ENCODE measurements at regions of chr1 and their contacts with region 1.

Region 1: GRCh38 chr1:47437447-47438164 is at the start of gene FOXD2:
- DNase-seq: peak; percentile 97
- H3K4me3 ChIP-seq: peak within 1 kb of the TSS; percentile 92
- H3K27ac ChIP-seq: peak within 1 kb of the TSS; percentile 78
- H3K4me1 ChIP-seq: peaks cover 11% of the 10 kb centered on the region
- CTCF ChIP-seq: peak; percentile 80
- total RNA-seq, gene FOXD2: 0.44 and 0.76 TPM in 2 replicates

Region 2: GRCh38 chr1:46152016-46152415 is 1285.6 kb before region 1 on chr1:
- CTCF ChIA-PET with region 1: interaction called, 18 read pairs
- POLR2A ChIA-PET with region 1: no interaction called
- intact Hi-C with region 1: no loop called
- DNase-seq: no peak
- H3K4me3 ChIP-seq: no peak overlapping the region
- H3K27ac ChIP-seq: no peak overlapping the region
- H3K4me1 ChIP-seq: no peaks in the 10 kb centered on the region
- CTCF ChIP-seq: no peak

Region 3: DNA sequence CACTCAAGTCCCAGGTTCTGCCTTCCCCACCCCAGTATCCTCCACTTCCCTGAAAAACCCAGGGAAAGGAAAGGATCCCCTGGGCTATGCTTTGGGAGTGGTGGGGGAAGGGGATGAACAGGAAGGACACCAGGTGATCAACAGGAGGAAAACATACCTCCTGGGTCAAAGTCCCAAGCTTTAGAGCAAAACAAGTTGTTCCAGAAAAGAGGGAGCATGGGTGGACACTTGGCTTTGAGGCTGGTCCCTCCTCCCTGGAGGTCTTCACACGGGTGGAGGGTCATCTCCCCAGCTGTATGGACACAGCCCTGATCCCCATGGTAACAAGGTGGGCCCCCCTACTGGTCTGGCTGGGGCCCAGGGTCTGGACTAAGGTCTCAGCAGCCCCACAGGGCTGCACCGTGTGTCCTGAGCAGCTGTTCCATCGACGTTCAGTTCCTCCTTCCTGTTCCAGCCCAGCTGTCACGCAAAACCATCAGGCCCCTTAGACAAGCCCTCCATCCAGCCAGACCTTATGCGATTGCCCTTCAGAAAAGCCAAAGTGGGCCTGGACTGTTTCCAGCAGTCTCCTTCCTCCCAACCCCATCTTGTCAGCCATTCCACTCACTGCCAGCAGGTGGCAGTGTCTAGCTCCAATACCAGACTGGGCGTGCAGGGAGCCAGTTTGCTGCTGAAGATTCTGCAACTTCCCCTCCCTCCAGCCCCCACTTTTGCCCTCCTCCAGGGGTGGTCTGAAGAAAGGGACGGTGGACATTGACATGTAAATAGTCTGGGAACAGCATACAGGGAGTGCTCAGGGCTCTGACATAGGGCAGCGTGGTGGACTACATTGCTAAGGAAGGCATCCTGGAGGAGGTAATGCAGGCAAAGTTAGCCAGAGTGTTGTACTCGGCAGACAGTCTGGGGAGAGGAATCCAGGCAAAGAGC is 244.9 kb before region 1 on chr1:
- CTCF ChIA-PET with region 1: no interaction called
- POLR2A ChIA-PET with region 1: no interaction called
- intact Hi-C with region 1: no loop called
- DNase-seq: peak; percentile 62
- H3K4me3 ChIP-seq: no peak overlapping the region
- H3K27ac ChIP-seq: no peak overlapping the region
- H3K4me1 ChIP-seq: no peaks in the 10 kb centered on the region
- CTCF ChIP-seq: peak; percentile 96

Region 4: DNA sequence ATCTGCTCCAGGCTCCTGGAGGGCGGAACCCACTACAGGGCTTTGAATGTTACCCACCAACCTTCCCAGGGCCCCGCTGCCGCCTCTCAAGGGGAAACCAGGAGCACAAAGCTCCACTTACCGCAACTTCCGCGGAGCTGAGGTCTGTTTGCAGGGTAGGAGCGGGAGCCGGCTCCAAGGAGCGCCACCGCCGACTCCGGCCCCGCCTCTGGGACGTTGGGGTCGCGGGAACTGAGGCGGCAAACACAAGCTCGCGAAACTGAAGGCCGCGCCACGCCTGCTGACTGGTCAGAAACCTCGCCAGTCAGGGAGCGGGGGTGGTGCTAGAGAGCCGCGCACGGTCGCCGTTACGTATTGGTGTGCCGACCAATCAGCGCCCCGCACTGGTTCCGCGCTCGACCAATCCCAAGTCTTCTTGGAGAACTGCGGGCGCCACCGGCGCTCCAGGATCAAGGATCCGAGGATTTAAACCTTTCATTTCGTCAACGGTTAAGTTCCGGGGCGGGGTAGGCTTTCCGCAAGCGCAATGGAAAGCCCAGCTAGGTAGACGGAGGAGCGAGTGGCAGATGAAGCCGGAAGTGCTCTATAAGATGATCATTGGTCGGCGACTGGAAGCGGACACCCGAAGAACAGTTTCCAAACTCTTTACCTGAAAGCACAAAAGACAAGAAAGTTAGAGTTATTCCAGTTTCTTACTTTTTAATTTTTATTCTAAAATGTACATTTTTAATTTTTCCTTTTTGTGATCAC is 123.5 kb before region 1 on chr1 and contains the start of gene STIL:
- CTCF ChIA-PET with region 1: no interaction called
- POLR2A ChIA-PET with region 1: no interaction called
- intact Hi-C with region 1: loop called (anchors 2 kb)
- DNase-seq: peak; percentile 100
- H3K4me3 ChIP-seq: peak within 1 kb of the TSS; percentile 97
- H3K27ac ChIP-seq: peak within 1 kb of the TSS; percentile 88
- H3K4me1 ChIP-seq: peaks cover 21% of the 10 kb centered on the region
- CTCF ChIP-seq: no peak
- total RNA-seq, gene STIL: 39.8 and 46.6 TPM in 2 replicates

Region 5: GRCh38 chr1:47351305-47351704 is 86.3 kb before region 1 on chr1:
- CTCF ChIA-PET with region 1: no interaction called
- POLR2A ChIA-PET with region 1: no interaction called
- intact Hi-C with region 1: no loop called
- DNase-seq: no peak
- H3K4me3 ChIP-seq: no peak overlapping the region
- H3K27ac ChIP-seq: no peak overlapping the region
- H3K4me1 ChIP-seq: no peaks in the 10 kb centered on the region
- CTCF ChIP-seq: no peak

Region 6: GRCh38 chr1:47388891-47389238 is 48.7 kb before region 1 on chr1:
- CTCF ChIA-PET with region 1: interaction called, 13 read pairs
- POLR2A ChIA-PET with region 1: interaction called, 7 read pairs
- intact Hi-C with region 1: loop called (anchors 1 kb)
- DNase-seq: peak; percentile 69
- H3K4me3 ChIP-seq: no peak overlapping the region
- H3K27ac ChIP-seq: no peak overlapping the region
- H3K4me1 ChIP-seq: peaks cover 10% of the 10 kb centered on the region
- CTCF ChIP-seq: peak; percentile 93

Region 7: DNA sequence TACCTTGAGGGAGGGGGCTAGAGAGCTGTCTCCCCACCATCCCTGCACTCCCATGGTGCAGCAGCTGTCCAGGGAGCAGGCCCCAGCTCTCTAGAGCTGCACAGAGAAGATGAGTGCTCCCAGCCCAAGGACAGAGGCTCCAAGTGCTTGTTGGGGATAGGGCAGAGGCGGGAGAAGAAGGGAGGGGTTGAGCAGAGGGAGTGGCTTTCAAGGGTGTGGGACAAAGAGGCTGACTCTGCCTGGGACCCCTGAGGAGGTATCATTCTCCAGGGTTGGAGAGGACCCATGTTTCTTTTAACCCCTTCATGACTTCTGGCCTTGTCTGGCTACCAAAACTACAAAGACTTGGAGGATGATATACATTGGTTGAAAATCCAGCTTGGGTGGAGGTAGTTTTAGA is 14.8 kb after region 1 on chr1:
- CTCF ChIA-PET with region 1: no interaction called
- POLR2A ChIA-PET with region 1: no interaction called
- intact Hi-C with region 1: no loop called
- DNase-seq: no peak
- H3K4me3 ChIP-seq: no peak overlapping the region
- H3K27ac ChIP-seq: no peak overlapping the region
- H3K4me1 ChIP-seq: no peaks in the 10 kb centered on the region
- CTCF ChIP-seq: no peak

Region 8: DNA sequence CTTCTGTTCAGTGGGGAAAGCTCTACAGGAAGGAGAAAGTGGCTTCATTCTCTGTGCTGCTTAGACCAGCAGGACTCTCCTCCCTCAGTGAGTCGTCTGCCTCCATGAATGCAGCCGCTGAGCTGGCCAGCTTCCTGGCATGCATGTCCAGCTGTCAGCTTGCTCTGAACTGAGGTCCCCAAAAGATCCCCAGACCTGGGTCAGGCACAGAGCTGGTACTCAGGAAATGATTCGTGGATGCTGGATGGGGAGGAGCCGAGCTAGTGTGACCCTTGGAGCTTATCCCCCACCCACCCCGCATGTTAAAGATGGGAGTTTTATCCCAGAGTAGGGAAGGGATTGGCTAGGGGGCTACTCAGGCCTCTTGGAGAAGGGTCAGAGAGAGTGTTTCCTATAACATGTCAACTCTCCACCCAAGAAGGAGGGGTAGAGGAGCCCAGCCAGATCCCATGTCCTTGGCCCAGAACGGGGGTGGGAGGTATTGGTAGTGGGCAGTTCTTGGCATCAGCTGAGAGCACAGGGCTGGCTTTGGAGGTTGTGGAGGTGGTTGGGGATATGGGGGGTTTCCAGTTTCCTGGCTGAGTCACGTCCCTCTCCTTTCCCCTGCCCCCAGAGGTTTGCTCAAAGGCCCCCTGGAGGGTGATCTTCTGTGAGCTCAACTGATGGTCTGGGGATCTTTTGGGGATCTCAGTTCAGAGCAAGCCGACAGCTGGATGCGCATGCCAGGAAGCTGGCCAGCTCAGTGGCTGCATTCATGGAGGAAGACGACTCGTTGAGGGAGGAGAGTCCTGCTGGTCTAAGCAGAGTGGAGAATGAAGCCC is 110.4 kb after region 1 on chr1:
- CTCF ChIA-PET with region 1: no interaction called
- POLR2A ChIA-PET with region 1: no interaction called
- intact Hi-C with region 1: no loop called
- DNase-seq: no peak
- H3K4me3 ChIP-seq: no peak overlapping the region
- H3K27ac ChIP-seq: no peak overlapping the region
- H3K4me1 ChIP-seq: no peaks in the 10 kb centered on the region
- CTCF ChIP-seq: no peak

Region 9: GRCh38 chr1:47710329-47711071 is 272.9 kb after region 1 on chr1:
- CTCF ChIA-PET with region 1: no interaction called
- POLR2A ChIA-PET with region 1: no interaction called
- intact Hi-C with region 1: loop called (anchors 2 kb)
- DNase-seq: peak; percentile 38
- H3K4me3 ChIP-seq: no peak overlapping the region
- H3K27ac ChIP-seq: no peak overlapping the region
- H3K4me1 ChIP-seq: no peaks in the 10 kb centered on the region
- CTCF ChIP-seq: peak; percentile 87